Mammary epithelial cell (primary cell): ENCODE measurements at regions of chr11 and their contacts with region 1.

Region 1: GRCh38 chr11:67606492-67607201 is at the start of gene NDUFV1:
- DNase-seq: peak; percentile 88
- H3K4me3 ChIP-seq: peak within 1 kb of the TSS; percentile 67 to 88 (median 72)
- H3K27ac ChIP-seq: peak within 1 kb of the TSS; percentile 67
- H3K4me1 ChIP-seq: peaks cover 3% of the 10 kb centered on the region
- H3K27me3 ChIP-seq: no peaks in the 10 kb centered on the region
- CTCF ChIP-seq: peak; percentile 20 to 68
- total RNA-seq, gene NDUFV1: 144 to 163 TPM

Region 2: GRCh38 chr11:67572747-67573419 is 33.8 kb before region 1 on chr11:
- CTCF ChIA-PET with region 1: no interaction called
- dilution Hi-C with region 1: no loop called
- in situ Hi-C with region 1: no loop called
- intact Hi-C with region 1: loop called (anchors 2 kb)
- DNase-seq: peak; percentile 50
- H3K4me3 ChIP-seq: no peak overlapping the region
- H3K27ac ChIP-seq: no peak overlapping the region
- H3K4me1 ChIP-seq: no peaks in the 10 kb centered on the region
- H3K27me3 ChIP-seq: no peaks in the 10 kb centered on the region
- CTCF ChIP-seq: peak; percentile 58 to 84

Region 3: DNA sequence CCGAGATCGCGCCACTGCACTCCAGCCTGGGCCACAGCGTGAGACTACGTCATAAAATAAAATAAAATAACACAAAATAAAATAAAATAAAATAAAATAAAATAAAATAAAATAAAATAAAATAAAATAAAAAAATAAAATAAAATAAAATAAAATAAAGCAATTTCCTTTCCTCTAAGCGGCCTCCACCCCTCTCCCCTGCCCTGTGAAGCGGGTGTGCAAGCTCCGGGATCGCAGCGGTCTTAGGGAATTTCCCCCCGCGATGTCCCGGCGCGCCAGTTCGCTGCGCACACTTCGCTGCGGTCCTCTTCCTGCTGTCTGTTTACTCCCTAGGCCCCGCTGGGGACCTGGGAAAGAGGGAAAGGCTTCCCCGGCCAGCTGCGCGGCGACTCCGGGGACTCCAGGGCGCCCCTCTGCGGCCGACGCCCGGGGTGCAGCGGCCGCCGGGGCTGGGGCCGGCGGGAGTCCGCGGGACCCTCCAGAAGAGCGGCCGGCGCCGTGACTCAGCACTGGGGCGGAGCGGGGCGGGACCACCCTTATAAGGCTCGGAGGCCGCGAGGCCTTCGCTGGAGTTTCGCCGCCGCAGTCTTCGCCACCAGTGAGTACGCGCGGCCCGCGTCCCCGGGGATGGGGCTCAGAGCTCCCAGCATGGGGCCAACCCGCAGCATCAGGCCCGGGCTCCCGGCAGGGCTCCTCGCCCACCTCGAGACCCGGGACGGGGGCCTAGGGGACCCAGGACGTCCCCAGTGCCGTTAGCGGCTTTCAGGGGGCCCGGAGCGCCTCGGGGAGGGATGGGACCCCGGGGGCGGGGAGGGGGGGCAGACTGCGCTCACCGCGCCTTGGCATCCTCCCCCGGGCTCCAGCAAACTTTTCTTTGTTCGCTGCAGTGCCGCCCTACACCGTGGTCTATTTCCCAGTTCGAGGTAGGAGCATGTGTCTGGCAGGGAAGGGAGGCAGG is 23.1 kb before region 1 on chr11 and contains the start of gene GSTP1:
- CTCF ChIA-PET with region 1: no interaction called
- dilution Hi-C with region 1: no loop called
- in situ Hi-C with region 1: no loop called
- intact Hi-C with region 1: loop called (anchors 1 kb)
- DNase-seq: peak; percentile 84
- H3K4me3 ChIP-seq: peak within 1 kb of the TSS; percentile 85 to 91 (median 89)
- H3K27ac ChIP-seq: peak within 1 kb of the TSS; percentile 93
- H3K4me1 ChIP-seq: peaks cover 20% of the 10 kb centered on the region
- H3K27me3 ChIP-seq: no peaks in the 10 kb centered on the region
- CTCF ChIP-seq: peak; percentile 28 to 53
- total RNA-seq, gene GSTP1: 1,123 to 1,562 TPM